ENCODE measurements at regions of chr2 and their contacts with region 1.

Region 1: GRCh38 chr2:227890495-227891079 is 19.2 kb downstream of the DAW1 start:
- DNase-seq: no peak
- H3K4me3 ChIP-seq: no peak overlapping the region
- H3K27ac ChIP-seq: no peak overlapping the region
- H3K4me1 ChIP-seq: no peaks in the 10 kb centered on the region
- H3K27me3 ChIP-seq: no peaks in the 10 kb centered on the region
- CTCF ChIP-seq: peak; percentile 11 to 50 (median 29)
- EP300 ChIP-seq: no peak
- POLR2A ChIP-seq: no peak

Region 2: DNA sequence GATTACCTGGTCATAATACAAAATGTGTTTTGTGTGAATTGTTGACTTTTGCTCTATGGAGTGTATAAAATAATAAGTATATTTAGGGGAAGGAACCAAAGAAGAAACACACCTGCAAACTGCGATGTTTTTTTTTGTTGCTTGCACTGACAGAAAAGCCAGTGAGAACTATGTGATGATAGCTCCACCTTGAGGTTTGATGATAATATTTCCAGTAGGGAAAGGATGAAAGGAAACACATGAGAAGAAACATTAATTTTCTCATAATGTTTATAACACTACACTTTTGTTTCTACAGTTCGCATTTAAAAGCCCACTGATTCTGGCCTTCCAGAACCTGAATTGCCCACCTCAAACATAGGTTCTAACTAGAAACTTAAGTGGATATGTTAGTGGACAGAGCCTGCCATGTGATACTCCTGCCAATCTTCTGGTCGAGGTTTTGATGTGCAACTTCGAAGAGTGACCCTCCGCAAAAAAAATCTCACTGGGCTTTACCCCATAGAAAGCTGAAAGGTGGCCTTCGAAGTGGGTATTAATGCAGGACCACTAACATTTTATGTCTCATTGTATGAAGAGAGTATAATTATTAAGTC is 767.3 kb after region 1 on chr2:
- intact Hi-C with region 1: loop called in 1 of 4 experiments (anchors 10 kb)
- DNase-seq: no peak
- H3K4me3 ChIP-seq: no peak overlapping the region
- H3K27ac ChIP-seq: no peak overlapping the region
- H3K4me1 ChIP-seq: peaks cover 2% of the 10 kb centered on the region
- H3K27me3 ChIP-seq: no peaks in the 10 kb centered on the region
- CTCF ChIP-seq: peak; percentile 28 to 36 (median 33)
- EP300 ChIP-seq: no peak
- POLR2A ChIP-seq: no peak

Measured in ovary (tissue), 10 donors.